ENCODE measurements at regions of chr19 and their contacts with region 1.

Region 1: GRCh38 chr19:4791170-4792018 is at the start of gene FEM1A:
- DNase-seq: peak; percentile 99
- H3K4me3 Mint-ChIP-seq: peak within 1 kb of the TSS; percentile 76
- H3K27ac Mint-ChIP-seq: peak within 1 kb of the TSS; percentile 87
- H3K4me1 Mint-ChIP-seq: peaks cover 33% of the 10 kb centered on the region
- H3K27me3 Mint-ChIP-seq: no peaks in the 10 kb centered on the region
- total RNA-seq, gene FEM1A: 11.9 TPM

Region 2: GRCh38 chr19:4738734-4739133 is 52.7 kb before region 1 on chr19:
- CTCF ChIA-PET with region 1: interaction called, 105 read pairs
- POLR2A ChIA-PET with region 1: no interaction called
- DNase-seq: no peak
- H3K4me3 Mint-ChIP-seq: no peak overlapping the region
- H3K27ac Mint-ChIP-seq: no peak overlapping the region
- H3K4me1 Mint-ChIP-seq: peaks cover 5% of the 10 kb centered on the region
- H3K27me3 Mint-ChIP-seq: peaks cover 5% of the 10 kb centered on the region

Region 3: DNA sequence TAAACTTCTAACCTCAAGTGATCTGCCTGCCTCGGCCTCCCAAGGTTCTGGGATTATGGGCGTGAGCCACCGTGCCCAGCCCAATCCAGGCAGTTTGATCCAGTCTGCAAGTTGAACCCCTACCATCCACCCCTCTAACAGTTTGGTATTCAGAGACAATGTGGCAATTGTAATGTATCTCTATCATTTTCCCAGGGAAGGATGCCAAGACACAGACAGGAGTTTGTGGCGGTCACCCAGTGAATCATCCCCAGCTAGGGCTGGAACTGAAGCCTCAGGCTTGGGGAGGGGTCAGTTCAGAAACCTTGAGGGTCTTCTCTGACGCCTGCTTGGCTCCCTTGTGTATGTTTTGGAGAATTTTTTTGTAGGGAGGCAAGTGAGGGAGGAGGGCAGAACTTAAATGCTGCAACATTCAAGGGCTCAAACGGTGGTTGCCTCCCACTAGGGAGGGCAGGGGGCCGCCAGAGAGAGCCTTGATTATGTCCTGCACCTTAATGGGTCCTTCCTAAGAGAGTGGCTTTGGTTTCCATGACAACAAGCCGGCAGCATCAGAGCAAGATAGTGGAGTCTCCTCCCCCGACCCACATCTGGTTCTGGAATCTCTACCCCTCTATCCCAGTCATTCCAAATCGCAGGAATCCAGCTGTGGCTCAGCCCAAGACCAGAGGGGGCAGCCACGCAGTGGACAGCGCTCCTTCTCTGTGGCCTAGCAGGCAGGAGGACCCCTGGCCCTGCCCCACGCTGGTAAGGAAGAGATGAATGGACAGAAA is 14.8 kb before region 1 on chr19:
- CTCF ChIA-PET with region 1: interaction called, 10 read pairs
- POLR2A ChIA-PET with region 1: no interaction called
- DNase-seq: no peak
- H3K4me3 Mint-ChIP-seq: no peak overlapping the region
- H3K27ac Mint-ChIP-seq: no peak overlapping the region
- H3K4me1 Mint-ChIP-seq: no peaks in the 10 kb centered on the region
- H3K27me3 Mint-ChIP-seq: peaks cover 4% of the 10 kb centered on the region

Region 4: DNA sequence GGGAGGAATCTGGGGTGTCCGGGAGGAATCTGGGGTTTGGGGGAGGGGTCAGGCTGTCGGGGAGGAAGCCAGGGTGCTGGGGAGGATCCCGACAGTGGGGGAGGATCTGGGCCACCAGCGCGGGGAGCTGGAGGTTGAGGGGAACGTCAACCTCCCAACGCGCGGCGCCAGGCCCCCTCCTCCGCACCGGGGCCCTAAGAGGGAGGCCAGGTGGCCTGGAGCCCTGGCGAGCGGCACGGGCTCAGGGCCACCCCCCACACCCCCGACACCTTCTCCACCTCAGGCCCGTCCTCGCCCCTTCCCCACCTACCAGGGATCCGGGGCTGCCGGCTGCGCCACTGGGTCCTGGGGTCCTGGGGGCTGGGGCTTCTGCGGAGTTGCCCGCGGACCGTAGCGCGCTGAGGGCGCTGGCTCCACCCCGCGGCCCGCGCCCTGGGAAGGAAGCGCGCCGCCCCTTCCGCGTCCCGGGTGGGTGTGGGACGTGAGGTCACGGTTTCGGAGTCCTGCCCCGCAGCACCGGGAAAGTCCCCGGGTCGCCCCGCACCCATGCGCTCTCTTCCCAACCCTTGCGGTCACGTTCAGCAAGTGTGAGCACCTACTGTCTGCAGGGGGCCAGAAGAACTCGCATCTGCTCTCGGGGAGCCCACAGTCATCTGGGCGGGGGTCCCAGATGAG is 40.0 kb after region 1 on chr19 and contains the start of gene TICAM1:
- CTCF ChIA-PET with region 1: interaction called, 12 read pairs
- POLR2A ChIA-PET with region 1: no interaction called
- DNase-seq: peak; percentile 79
- H3K4me3 Mint-ChIP-seq: peak within 1 kb of the TSS; percentile 82
- H3K27ac Mint-ChIP-seq: peak within 1 kb of the TSS; percentile 89
- H3K4me1 Mint-ChIP-seq: peaks cover 29% of the 10 kb centered on the region
- H3K27me3 Mint-ChIP-seq: no peaks in the 10 kb centered on the region
- total RNA-seq, gene TICAM1: 18.6 to 19.2 TPM

Region 5: GRCh38 chr19:4909897-4910593 is 118.7 kb after region 1 on chr19:
- CTCF ChIA-PET with region 1: interaction called, 11 read pairs
- POLR2A ChIA-PET with region 1: no interaction called
- DNase-seq: peak; percentile 96
- H3K4me3 Mint-ChIP-seq: peak overlapping the region; percentile 81
- H3K27ac Mint-ChIP-seq: peak overlapping the region; percentile 89
- H3K4me1 Mint-ChIP-seq: peaks cover 53% of the 10 kb centered on the region
- H3K27me3 Mint-ChIP-seq: no peaks in the 10 kb centered on the region